AG04450 (cell line): ENCODE measurements at regions of chr13 and their contacts with region 1.

Region 1: GRCh38 chr13:39616087-39616694 is 13.2 kb upstream of the LHFPL6 start:
- DNase-seq: peak; percentile 33
- H3K4me3 ChIP-seq: no peak overlapping the region
- H3K27ac ChIP-seq: no peak overlapping the region
- H3K27me3 ChIP-seq: peaks cover 2% of the 10 kb centered on the region
- CTCF ChIP-seq: peak; percentile 98

Region 2: DNA sequence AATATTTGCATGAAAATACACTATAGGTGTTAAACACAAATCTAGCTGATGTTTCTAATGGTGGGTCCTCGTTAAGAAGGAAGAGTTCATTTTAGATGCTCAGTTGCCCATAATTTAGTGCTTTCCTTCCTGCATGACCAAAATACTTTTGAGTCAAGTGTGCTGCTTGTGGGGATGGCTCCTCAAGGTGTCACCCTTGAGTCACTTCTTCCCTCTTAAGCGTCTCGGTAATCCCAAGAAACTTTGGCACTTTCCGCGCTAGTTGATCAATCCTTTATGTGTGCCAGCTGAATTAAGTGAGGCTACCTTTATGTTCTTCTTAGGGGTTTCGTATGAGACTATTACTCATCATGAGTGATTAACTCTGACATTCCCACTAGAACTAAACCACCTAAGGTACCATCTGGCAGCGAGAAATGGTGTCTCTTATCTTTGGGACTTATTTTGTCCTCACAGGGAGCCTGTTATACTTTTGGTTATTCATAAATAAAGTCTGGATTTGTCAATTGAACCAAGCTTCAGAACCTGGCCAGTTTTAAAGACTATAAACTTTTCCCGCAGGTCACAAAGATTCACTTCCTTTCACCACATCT is 471.2 kb before region 1 on chr13:
- CTCF ChIA-PET with region 1: interaction called, 203 read pairs
- POLR2A ChIA-PET with region 1: no interaction called
- DNase-seq: peak; percentile 26
- H3K4me3 ChIP-seq: no peak overlapping the region
- H3K27ac ChIP-seq: no peak overlapping the region
- H3K27me3 ChIP-seq: no peaks in the 10 kb centered on the region
- CTCF ChIP-seq: peak; percentile 88

Region 3: GRCh38 chr13:39263033-39263432 is 353.2 kb before region 1 on chr13:
- CTCF ChIA-PET with region 1: interaction called, 23 read pairs
- POLR2A ChIA-PET with region 1: no interaction called
- DNase-seq: no peak
- H3K4me3 ChIP-seq: no peak overlapping the region
- H3K27ac ChIP-seq: no peak overlapping the region
- H3K27me3 ChIP-seq: no peaks in the 10 kb centered on the region
- CTCF ChIP-seq: peak; percentile 70

Region 4: GRCh38 chr13:39318161-39318560 is 298.0 kb before region 1 on chr13:
- CTCF ChIA-PET with region 1: interaction called, 11 read pairs
- POLR2A ChIA-PET with region 1: no interaction called
- DNase-seq: no peak
- H3K4me3 ChIP-seq: no peak overlapping the region
- H3K27ac ChIP-seq: no peak overlapping the region
- H3K27me3 ChIP-seq: no peaks in the 10 kb centered on the region
- CTCF ChIP-seq: no peak

Region 5: GRCh38 chr13:39451860-39452301 is 164.3 kb before region 1 on chr13:
- CTCF ChIA-PET with region 1: interaction called, 10 read pairs
- POLR2A ChIA-PET with region 1: interaction called, 3 read pairs
- DNase-seq: no peak
- H3K4me3 ChIP-seq: no peak overlapping the region
- H3K27ac ChIP-seq: no peak overlapping the region
- H3K27me3 ChIP-seq: no peaks in the 10 kb centered on the region
- CTCF ChIP-seq: no peak

Region 6: DNA sequence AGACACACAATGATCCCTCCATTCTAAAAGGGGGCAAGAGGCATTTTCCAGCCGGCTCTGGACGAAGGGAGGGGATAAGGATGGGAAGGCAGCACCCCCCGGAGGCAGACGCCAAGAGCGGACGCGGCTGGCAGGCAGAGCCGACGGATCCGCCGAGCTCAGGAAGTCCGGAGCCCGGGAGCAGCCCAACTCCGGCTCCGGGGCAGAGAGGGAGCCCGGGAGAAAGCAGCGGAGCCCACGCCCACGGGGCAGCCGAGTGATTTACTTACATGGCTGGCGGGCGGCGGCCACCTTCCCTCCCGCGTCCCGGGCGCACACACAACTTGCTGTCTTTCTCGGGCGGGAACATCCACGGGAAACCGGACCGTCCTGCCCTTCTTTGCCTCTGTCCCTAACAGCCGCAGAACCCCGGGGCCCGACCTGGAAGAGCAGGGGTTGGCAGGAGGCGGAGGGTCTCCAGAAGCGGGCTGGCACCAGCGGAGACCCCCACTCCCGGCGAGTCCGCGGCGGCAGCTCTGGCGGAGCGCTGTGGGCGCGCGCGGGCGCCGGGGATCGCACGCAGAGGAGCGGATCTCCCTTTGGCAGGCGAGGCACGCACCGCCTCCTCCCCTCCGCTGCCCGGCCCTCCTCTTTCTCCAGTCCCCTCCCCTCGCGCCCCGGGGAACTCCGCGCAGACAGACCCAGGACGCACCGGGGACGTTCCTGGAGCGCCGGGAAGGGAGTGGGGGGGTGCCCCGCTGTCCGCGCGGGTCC is 13.4 kb before region 1 on chr13 and contains the start of gene LHFPL6:
- CTCF ChIA-PET with region 1: interaction called, 36 read pairs
- POLR2A ChIA-PET with region 1: no interaction called
- DNase-seq: peak; percentile 41
- H3K4me3 ChIP-seq: peak within 1 kb of the TSS; percentile 88
- H3K27ac ChIP-seq: peak within 1 kb of the TSS; percentile 84
- H3K27me3 ChIP-seq: no peaks in the 10 kb centered on the region
- CTCF ChIP-seq: peak; percentile 60
- polyA plus RNA-seq, gene LHFPL6: 36.9 and 40.3 TPM in 2 replicates

Region 7: DNA sequence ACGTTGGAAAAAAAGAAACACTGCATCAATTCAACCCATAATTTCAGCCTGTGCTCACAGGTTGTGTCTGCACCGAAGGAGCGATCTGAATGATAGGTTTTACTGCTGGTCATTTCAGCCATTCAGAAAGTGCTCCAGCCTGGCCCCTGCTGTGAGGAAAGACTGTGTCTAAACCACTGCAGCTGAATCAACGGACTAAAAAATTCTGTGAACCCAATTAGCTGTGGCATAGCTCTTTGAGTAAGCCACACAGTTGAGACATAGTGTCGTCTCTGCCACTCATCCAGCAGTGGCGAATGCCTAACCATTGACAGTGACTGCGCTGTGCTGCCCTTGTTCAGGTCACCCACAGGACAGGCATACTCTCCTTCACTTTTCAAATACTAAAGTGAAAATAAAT is 219.1 kb after region 1 on chr13:
- CTCF ChIA-PET with region 1: no interaction called
- POLR2A ChIA-PET with region 1: no interaction called
- DNase-seq: no peak
- H3K4me3 ChIP-seq: no peak overlapping the region
- H3K27ac ChIP-seq: no peak overlapping the region
- H3K27me3 ChIP-seq: no peaks in the 10 kb centered on the region
- CTCF ChIP-seq: no peak